ENCODE measurements at regions of chr15 and their contacts with region 1.

Region 1: GRCh38 chr15:81384891-81385720 is 11.1 kb upstream of the TMC3 start:
- DNase-seq: no peak
- H3K4me3 ChIP-seq: no peak overlapping the region
- H3K27ac ChIP-seq: no peak overlapping the region
- H3K4me1 ChIP-seq: no peaks in the 10 kb centered on the region
- H3K27me3 ChIP-seq: no peaks in the 10 kb centered on the region
- CTCF ChIP-seq: no peak
- POLR2A ChIP-seq: no peak

Region 2: GRCh38 chr15:80755885-80756284 is 629.2 kb before region 1 on chr15:
- CTCF ChIA-PET with region 1: no interaction called
- POLR2A ChIA-PET with region 1: no interaction called
- dilution Hi-C with region 1: no loop called
- intact Hi-C with region 1: loop called (anchors 5 kb)
- DNase-seq: no peak
- H3K4me3 ChIP-seq: no peak overlapping the region
- H3K27ac ChIP-seq: no peak overlapping the region
- H3K4me1 ChIP-seq: peaks cover 7% of the 10 kb centered on the region
- H3K27me3 ChIP-seq: no peaks in the 10 kb centered on the region
- CTCF ChIP-seq: no peak
- POLR2A ChIP-seq: no peak